Dendritic cell treated with granulocyte-macrophage colony-stimulating factor and Interleukin-4, amounts not matched to agents 40 ng/mL and 50 ng/mL, for 4 days (primary cell): ENCODE measurements at regions of chr1 and their contacts with region 1.

Region 1: DNA sequence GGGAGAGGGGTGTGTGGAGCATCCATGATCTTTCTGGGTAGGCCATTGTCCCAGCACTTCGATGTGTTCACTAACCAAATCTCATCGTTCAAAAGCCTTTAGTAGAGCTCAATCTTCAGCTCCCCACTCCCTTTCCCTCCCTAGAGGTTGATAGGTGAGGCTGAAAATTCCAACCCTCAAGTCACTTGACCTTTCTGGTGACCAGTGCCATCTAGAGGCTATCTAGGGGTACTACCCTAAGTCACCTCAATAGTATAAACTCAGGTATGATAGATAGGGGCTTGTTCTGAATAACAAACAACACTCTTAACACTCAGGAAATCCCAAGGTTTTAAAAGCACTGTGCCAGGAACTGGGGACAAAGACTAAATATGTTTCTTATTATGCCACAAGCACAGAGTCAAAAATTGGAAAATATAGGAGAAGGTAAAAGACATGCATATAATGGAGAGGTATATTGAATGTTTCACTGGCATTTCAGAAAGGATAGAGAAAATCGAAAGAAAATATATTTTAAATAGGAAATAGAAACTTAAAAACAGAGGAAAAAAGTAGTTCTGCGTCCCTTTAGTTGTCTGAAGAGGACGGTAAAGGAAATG is 42.9 kb upstream of the CD53 start:
- H3K4me3 Mint-ChIP-seq: no peak overlapping the region
- H3K27ac Mint-ChIP-seq: no peak overlapping the region
- H3K4me1 Mint-ChIP-seq: no peaks in the 10 kb centered on the region
- H3K27me3 Mint-ChIP-seq: peaks cover 2% of the 10 kb centered on the region

Region 2: GRCh38 chr1:109838838-109839240 is 991.2 kb before region 1 on chr1:
- intact Hi-C with region 1: no loop called
- H3K4me3 Mint-ChIP-seq: no peak overlapping the region
- H3K27ac Mint-ChIP-seq: no peak overlapping the region
- H3K4me1 Mint-ChIP-seq: no peaks in the 10 kb centered on the region
- H3K27me3 Mint-ChIP-seq: peaks cover 9% of the 10 kb centered on the region

Region 3: DNA sequence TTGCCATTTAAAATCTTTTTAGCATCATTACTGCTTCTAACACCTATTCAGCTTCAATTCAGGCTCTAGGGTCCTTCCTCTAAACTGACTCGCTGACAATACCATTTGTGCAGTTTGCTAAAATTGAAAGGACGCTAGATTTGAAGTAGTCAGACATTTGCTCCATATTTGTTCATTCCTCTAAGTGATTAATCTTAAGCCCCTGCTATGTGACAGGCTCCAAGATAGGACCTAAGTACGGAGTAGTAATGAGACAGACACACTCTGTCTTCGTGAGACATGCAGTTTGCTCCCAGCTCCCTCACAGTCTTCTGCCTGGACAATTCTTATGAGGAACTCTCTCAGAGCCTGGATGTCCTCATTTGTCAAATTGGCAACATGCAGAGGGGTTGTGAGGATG is 16.8 kb after region 1 on chr1:
- intact Hi-C with region 1: loop called (anchors 1 kb)
- H3K4me3 Mint-ChIP-seq: no peak overlapping the region
- H3K27ac Mint-ChIP-seq: no peak overlapping the region
- H3K4me1 Mint-ChIP-seq: no peaks in the 10 kb centered on the region
- H3K27me3 Mint-ChIP-seq: no peaks in the 10 kb centered on the region

Region 4: GRCh38 chr1:110963691-110964399 is 133.8 kb after region 1 on chr1 and contains the start of gene LRIF1:
- intact Hi-C with region 1: no loop called
- H3K4me3 Mint-ChIP-seq: peak within 1 kb of the TSS; percentile 85
- H3K27ac Mint-ChIP-seq: peak within 1 kb of the TSS; percentile 99
- H3K4me1 Mint-ChIP-seq: peaks cover 31% of the 10 kb centered on the region
- H3K27me3 Mint-ChIP-seq: peaks cover 23% of the 10 kb centered on the region

Region 5: DNA sequence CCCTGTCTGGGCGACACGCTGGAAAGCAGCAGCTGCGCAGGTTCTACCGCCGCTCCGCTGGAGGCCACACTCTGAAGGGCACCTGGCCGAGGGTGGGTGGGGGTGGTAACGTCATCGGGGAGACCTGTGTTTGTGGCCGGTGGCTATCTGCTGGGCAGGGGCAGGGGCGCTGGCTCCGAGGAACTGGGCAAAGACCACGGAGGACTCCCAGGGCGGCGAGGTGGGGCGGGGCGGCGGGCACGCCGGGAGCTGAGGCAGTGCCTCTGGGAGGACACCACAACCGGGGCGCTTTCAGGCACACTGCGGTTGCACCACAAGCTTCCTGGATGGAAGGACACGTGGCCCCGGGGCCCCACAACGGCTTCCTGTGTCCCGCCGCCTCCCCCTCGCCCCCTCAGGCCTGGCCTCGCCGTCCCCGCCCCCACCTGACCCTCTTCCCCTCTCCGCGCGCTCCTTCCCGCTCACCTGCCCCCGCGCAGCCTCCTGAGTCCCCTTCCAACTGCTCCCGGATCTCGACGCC is 373.7 kb after region 1 on chr1:
- intact Hi-C with region 1: no loop called
- H3K4me3 Mint-ChIP-seq: peak overlapping the region; percentile 76
- H3K27ac Mint-ChIP-seq: peak overlapping the region; percentile 83
- H3K4me1 Mint-ChIP-seq: peaks cover 87% of the 10 kb centered on the region
- H3K27me3 Mint-ChIP-seq: no peaks in the 10 kb centered on the region